ENCODE measurements at regions of chr14 and their contacts with region 1.

Region 1: DNA sequence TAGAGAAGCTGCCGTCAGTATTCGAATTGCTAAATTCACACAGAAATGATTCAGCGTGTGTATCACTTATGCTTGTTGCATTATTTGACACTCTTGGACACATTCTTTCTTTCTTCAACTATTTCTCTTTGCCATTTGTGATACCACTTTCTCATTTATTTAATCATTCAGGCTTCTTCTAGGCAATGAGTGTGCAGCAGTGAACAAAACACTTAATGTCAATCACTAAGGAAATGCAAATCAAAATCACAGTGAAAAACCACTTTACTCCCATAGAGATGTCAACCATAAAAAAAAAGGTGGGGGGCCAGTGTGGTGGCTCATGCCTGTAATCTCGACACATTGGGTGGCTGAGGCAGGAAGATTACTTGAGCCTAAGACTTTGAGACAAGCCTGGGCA is 214.6 kb downstream of the FLRT2 start:
- DNase-seq: no peak
- H3K4me3 ChIP-seq: no peak overlapping the region
- H3K27ac ChIP-seq: no peak overlapping the region
- H3K4me1 ChIP-seq: no peaks in the 10 kb centered on the region
- H3K27me3 ChIP-seq: no peaks in the 10 kb centered on the region
- CTCF ChIP-seq: no peak
- EP300 ChIP-seq: no peak
- POLR2A ChIP-seq: no peak

Region 2: DNA sequence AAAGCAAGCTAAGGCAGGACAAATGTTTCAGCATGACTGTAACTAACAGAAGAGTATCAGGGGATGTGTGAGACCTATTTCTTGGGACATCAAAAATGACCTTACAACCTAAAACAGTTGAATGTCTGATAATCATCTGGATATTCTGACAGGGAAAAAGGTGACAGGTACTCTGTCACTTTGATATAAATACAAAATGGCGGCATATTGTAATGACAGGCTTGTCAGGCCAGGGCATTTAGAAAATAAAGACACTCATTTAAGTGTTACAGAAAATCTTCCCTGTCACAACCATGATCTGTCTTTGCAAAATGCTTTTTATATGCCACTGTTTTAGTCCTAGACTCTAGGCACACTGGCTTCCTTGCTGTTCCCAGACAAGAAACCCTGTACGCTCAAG is 1247.9 kb before region 1 on chr14:
- intact Hi-C with region 1: loop called in 1 of 4 experiments (anchors 10 kb)
- DNase-seq: no peak
- H3K4me3 ChIP-seq: no peak overlapping the region
- H3K27ac ChIP-seq: no peak overlapping the region
- H3K4me1 ChIP-seq: no peaks in the 10 kb centered on the region
- H3K27me3 ChIP-seq: no peaks in the 10 kb centered on the region
- CTCF ChIP-seq: no peak
- EP300 ChIP-seq: no peak
- POLR2A ChIP-seq: no peak

Region 3: DNA sequence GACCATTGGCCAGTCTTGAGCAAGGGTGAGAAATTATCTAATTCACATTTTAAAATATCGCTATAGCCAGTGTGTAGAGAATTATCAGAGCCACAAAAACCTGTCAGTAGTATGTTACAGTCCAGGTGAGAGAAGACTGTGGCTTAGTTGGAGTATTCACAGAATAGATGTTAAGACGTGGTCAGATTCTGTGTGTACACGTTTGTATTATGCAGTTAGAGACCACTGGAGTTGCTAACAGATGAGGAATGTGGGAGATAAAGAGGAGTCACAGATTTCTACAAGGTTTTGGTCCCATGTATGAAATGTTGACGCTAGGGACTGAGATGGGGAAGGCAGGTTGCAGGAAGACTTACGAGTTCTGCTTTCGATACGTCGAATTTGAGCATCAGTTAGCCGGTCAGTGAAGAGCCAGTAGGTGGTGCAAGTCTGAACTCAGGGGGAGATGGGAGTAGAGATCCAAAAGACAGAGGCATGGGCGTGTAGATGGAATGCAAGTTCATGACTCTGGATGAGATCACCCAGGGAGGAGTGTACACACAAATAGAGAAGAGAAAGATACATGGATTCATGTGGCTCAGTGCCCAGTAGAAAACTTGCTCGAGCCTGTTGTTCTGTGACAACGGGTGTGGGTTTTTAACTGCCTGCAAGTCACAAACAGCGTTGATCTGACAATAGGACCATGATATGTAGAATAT is 329.4 kb before region 1 on chr14:
- intact Hi-C with region 1: no loop called
- DNase-seq: peak; percentile 26 to 64 (median 42)
- H3K4me3 ChIP-seq: peak overlapping the region; percentile 7
- H3K27ac ChIP-seq: no peak overlapping the region
- H3K4me1 ChIP-seq: peaks cover 3% of the 10 kb centered on the region
- H3K27me3 ChIP-seq: no peaks in the 10 kb centered on the region
- CTCF ChIP-seq: no peak
- EP300 ChIP-seq: no peak
- POLR2A ChIP-seq: no peak

Measured in ovary (tissue), 10 donors.